ENCODE measurements at regions of chr7 and their contacts with region 1.

Region 1: GRCh38 chr7:55964261-55965099 is at the start of gene NIPSNAP2:
- DNase-seq: peak; percentile 26 to 89 (median 53)
- ATAC-seq: peak; percentile 92
- H3K4me3 ChIP-seq: peak within 1 kb of the TSS; percentile 60
- H3K4me3 Mint-ChIP-seq: peak within 1 kb of the TSS; percentile 90
- H3K27ac ChIP-seq: peak within 1 kb of the TSS; percentile 70 to 76
- H3K27ac Mint-ChIP-seq: peak within 1 kb of the TSS; percentile 92
- H3K4me1 ChIP-seq: peaks cover 37% of the 10 kb centered on the region
- H3K4me1 Mint-ChIP-seq: peaks cover 43% of the 10 kb centered on the region
- H3K27me3 ChIP-seq: no peaks in the 10 kb centered on the region
- H3K27me3 Mint-ChIP-seq: no peaks in the 10 kb centered on the region
- CTCF ChIP-seq: peak; percentile 13
- total RNA-seq, gene NIPSNAP2: 40.7 to 45.9 TPM

Region 2: DNA sequence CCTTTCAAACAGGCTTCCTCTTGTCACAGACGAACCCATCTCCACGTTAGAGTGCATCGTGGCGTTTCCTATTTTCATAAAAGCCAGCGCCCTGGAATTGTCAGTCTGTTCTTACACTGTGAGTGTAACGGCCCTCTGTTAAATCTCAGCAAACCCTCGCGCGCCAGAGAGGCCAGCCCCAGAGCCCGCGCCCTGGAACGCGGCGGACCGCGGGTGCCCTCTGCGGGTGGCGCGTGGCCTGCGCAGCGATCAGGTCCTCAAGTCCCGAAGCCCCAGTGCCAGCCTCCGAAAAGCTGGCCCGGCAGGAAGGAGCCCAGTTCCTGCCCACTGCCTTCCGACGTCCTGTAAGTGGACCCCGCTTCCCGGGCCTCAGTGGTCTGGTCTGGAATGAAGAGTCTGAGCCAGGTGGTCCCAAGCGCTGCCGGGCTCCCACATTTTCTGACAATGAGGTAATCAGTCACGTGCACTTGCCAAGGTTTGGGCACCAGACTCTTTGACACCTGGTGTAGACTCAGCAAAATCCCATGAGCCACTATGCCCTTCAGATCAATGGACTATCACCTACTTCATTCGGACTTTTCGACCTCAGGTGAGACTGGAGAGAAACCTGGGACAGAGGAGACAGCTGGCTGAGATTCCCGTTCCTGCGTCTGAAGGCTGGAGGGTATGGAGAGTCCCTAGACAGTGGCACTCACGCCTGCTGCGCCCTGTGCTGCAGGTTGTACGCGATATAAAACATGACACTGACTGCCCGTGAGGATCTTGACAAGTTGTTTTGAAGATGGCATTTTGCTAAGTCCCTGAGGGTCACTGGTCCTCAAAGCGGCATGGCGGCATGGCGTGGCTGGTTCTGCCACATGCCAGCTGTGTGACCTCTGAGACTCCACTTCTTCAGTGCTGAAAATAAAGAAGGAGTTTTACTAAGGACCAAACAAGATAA is 708.7 kb before region 1 on chr7:
- CTCF ChIA-PET with region 1: no interaction called
- POLR2A ChIA-PET with region 1: interaction called, 3 read pairs
- intact Hi-C with region 1: loop called in 1 of 2 experiments (anchors 10 kb)
- DNase-seq: peak; percentile 28 to 82 (median 62)
- ATAC-seq: peak; percentile 91
- H3K4me3 ChIP-seq: peak overlapping the region; percentile 55
- H3K4me3 Mint-ChIP-seq: peak overlapping the region; percentile 93
- H3K27ac ChIP-seq: no peak overlapping the region
- H3K27ac Mint-ChIP-seq: no peak overlapping the region
- H3K4me1 ChIP-seq: peaks cover 18% of the 10 kb centered on the region
- H3K4me1 Mint-ChIP-seq: peaks cover 8% of the 10 kb centered on the region
- H3K27me3 ChIP-seq: peaks cover 29 to 38% of the 10 kb centered on the region in 2 experiments
- H3K27me3 Mint-ChIP-seq: peaks cover 60% of the 10 kb centered on the region
- CTCF ChIP-seq: no peak

Region 3: GRCh38 chr7:55360486-55360885 is 604.0 kb before region 1 on chr7:
- CTCF ChIA-PET with region 1: no interaction called
- POLR2A ChIA-PET with region 1: no interaction called
- intact Hi-C with region 1: loop called in 1 of 2 experiments (anchors 5 kb)
- DNase-seq: no peak
- ATAC-seq: no peak
- H3K4me3 ChIP-seq: no peak overlapping the region
- H3K4me3 Mint-ChIP-seq: no peak overlapping the region
- H3K27ac ChIP-seq: no peak overlapping the region
- H3K27ac Mint-ChIP-seq: no peak overlapping the region
- H3K4me1 ChIP-seq: peaks cover 5% of the 10 kb centered on the region
- H3K4me1 Mint-ChIP-seq: peaks cover 10% of the 10 kb centered on the region
- H3K27me3 ChIP-seq: peaks cover 0 to 3% of the 10 kb centered on the region in 2 experiments
- H3K27me3 Mint-ChIP-seq: peaks cover 15% of the 10 kb centered on the region
- CTCF ChIP-seq: no peak

Region 4: GRCh38 chr7:55641273-55641691 is 323.2 kb before region 1 on chr7:
- CTCF ChIA-PET with region 1: interaction called, 4 read pairs
- POLR2A ChIA-PET with region 1: interaction called, 5 read pairs
- intact Hi-C with region 1: loop called (anchors 1 to 5 kb)
- DNase-seq: peak in 10 of 14 experiments; percentile 4 to 79 (median 14)
- ATAC-seq: peak; percentile 87
- H3K4me3 ChIP-seq: no peak overlapping the region
- H3K4me3 Mint-ChIP-seq: no peak overlapping the region
- H3K27ac ChIP-seq: no peak overlapping the region
- H3K27ac Mint-ChIP-seq: no peak overlapping the region
- H3K4me1 ChIP-seq: peaks cover 6% of the 10 kb centered on the region
- H3K4me1 Mint-ChIP-seq: peaks cover 6% of the 10 kb centered on the region
- H3K27me3 ChIP-seq: no peaks in the 10 kb centered on the region
- H3K27me3 Mint-ChIP-seq: no peaks in the 10 kb centered on the region
- CTCF ChIP-seq: peak; percentile 80

Region 5: GRCh38 chr7:55951637-55952351 is 12.7 kb before region 1 on chr7 and contains the start of gene MRPS17:
- CTCF ChIA-PET with region 1: interaction called, 4 read pairs
- POLR2A ChIA-PET with region 1: interaction called, 6 read pairs
- intact Hi-C with region 1: loop called (anchors 1 kb)
- DNase-seq: peak; percentile 82 to 97 (median 91)
- ATAC-seq: peak; percentile 99
- H3K4me3 ChIP-seq: peak within 1 kb of the TSS; percentile 96
- H3K4me3 Mint-ChIP-seq: peak within 1 kb of the TSS; percentile 94
- H3K27ac ChIP-seq: peak within 1 kb of the TSS; percentile 76 to 89
- H3K27ac Mint-ChIP-seq: peak within 1 kb of the TSS; percentile 92
- H3K4me1 ChIP-seq: peaks cover 13% of the 10 kb centered on the region
- H3K4me1 Mint-ChIP-seq: peaks cover 26% of the 10 kb centered on the region
- H3K27me3 ChIP-seq: no peaks in the 10 kb centered on the region
- H3K27me3 Mint-ChIP-seq: no peaks in the 10 kb centered on the region
- CTCF ChIP-seq: no peak
- total RNA-seq, gene MRPS17: 6.7 to 6.9 TPM

Region 6: GRCh38 chr7:56106108-56107073 is 141.9 kb after region 1 on chr7 and contains the start of gene CHCHD2:
- CTCF ChIA-PET with region 1: interaction called, 3 read pairs
- POLR2A ChIA-PET with region 1: interaction called, 18 read pairs
- intact Hi-C with region 1: loop called in 1 of 2 experiments (anchors 5 kb)
- DNase-seq: peak; percentile 85 to 99 (median 90)
- ATAC-seq: peak; percentile 92
- H3K4me3 ChIP-seq: peak within 1 kb of the TSS; percentile 97
- H3K4me3 Mint-ChIP-seq: peak within 1 kb of the TSS; percentile 96
- H3K27ac ChIP-seq: peak within 1 kb of the TSS; percentile 91 to 95
- H3K27ac Mint-ChIP-seq: peak within 1 kb of the TSS; percentile 98
- H3K4me1 ChIP-seq: peaks cover 22% of the 10 kb centered on the region
- H3K4me1 Mint-ChIP-seq: peaks cover 37% of the 10 kb centered on the region
- H3K27me3 ChIP-seq: no peaks in the 10 kb centered on the region
- H3K27me3 Mint-ChIP-seq: no peaks in the 10 kb centered on the region
- CTCF ChIP-seq: no peak
- total RNA-seq, gene CHCHD2: 250 to 252 TPM